MCF 10A (cell line): ENCODE measurements at regions of chr3 and their contacts with region 1.

Region 1: GRCh38 chr3:134373994-134374790 is at the start of gene AMOTL2:
- DNase-seq: peak; percentile 93
- H3K4me3 Mint-ChIP-seq: peak within 1 kb of the TSS; percentile 93
- H3K27ac Mint-ChIP-seq: peak within 1 kb of the TSS; percentile 88
- H3K4me1 Mint-ChIP-seq: peaks cover 48% of the 10 kb centered on the region
- H3K27me3 Mint-ChIP-seq: no peaks in the 10 kb centered on the region
- CTCF ChIP-seq: no peak
- total RNA-seq, gene AMOTL2: 92.6 and 137 TPM in 2 replicates

Region 2: DNA sequence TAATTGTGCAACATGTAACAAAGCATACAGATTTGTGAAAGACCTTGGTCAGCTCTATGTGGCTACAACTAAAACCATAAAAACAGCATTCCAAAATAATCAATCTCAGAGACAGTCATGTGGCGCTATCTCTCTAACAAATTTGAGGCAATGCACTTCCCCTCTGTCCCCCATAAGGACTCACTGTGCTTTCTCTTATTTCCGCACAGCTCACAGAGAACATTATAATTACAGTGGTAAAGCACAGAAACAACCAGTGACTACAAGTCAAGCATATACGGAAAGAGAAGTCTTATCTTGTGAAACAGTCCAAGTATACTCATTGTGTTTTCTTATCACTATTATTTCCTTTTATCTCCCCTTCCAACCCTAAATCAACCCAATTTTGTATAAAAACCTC is 187.8 kb before region 1 on chr3:
- CTCF ChIA-PET with region 1: no interaction called
- POLR2A ChIA-PET with region 1: no interaction called
- intact Hi-C with region 1: no loop called
- DNase-seq: no peak
- H3K4me3 Mint-ChIP-seq: no peak overlapping the region
- H3K27ac Mint-ChIP-seq: no peak overlapping the region
- H3K4me1 Mint-ChIP-seq: peaks cover 5% of the 10 kb centered on the region
- H3K27me3 Mint-ChIP-seq: no peaks in the 10 kb centered on the region
- CTCF ChIP-seq: no peak

Region 3: GRCh38 chr3:134320749-134321148 is 53.4 kb before region 1 on chr3:
- CTCF ChIA-PET with region 1: interaction called, 4 read pairs
- POLR2A ChIA-PET with region 1: interaction called, 55 read pairs
- intact Hi-C with region 1: no loop called
- DNase-seq: peak; percentile 84
- H3K4me3 Mint-ChIP-seq: no peak overlapping the region
- H3K27ac Mint-ChIP-seq: peak overlapping the region; percentile 66
- H3K4me1 Mint-ChIP-seq: peaks cover 43% of the 10 kb centered on the region
- H3K27me3 Mint-ChIP-seq: no peaks in the 10 kb centered on the region
- CTCF ChIP-seq: no peak

Region 4: GRCh38 chr3:134333522-134334181 is 40.5 kb before region 1 on chr3:
- CTCF ChIA-PET with region 1: interaction called, 4 read pairs
- POLR2A ChIA-PET with region 1: interaction called, 55 read pairs
- intact Hi-C with region 1: no loop called
- DNase-seq: no peak
- H3K4me3 Mint-ChIP-seq: no peak overlapping the region
- H3K27ac Mint-ChIP-seq: peak overlapping the region; percentile 84
- H3K4me1 Mint-ChIP-seq: peaks cover 83% of the 10 kb centered on the region
- H3K27me3 Mint-ChIP-seq: no peaks in the 10 kb centered on the region
- CTCF ChIP-seq: no peak

Region 5: DNA sequence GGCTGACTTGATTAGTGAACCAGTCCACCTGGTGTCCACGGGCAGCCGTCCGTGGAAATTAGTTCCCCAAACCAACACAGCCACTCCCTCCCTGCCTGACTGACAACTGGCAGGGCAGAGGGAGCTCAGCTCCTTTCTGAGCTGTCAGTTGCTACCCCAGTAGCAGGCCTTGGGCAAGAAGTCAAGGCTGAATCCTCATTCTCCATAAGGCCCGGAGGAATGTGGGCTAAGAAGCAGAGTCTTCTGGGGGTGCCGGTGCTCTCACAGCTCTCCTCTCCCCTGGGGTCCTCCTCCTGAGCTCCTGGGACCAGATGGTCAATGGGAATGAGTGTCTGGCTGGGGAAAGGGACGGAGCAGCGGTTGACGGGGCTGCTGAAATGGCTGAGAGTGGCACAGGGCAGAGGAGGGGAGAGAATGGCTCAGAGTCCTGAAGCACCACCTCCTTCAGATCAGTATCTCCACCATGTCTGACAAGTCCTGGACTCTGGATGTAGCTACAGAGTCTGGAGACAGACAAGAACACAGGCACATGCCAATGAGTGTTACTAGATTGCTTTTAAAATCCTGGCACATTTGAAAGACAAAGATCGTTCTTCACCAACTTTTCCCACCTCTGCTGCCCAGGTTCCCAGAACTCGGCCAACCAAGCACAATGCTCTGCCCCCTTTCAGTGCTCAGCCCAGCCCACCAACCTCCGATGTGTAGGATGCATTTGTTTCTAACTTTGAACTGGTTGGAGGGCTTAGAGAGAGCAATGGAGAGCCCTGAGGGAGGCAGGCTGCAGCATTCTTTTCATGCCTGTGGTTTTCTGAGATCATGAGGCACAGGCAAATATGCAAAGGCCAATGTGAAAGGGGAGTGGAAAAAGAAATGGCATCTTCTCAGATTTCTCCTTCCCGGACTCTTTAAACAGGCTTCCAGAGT is 16.7 kb before region 1 on chr3:
- CTCF ChIA-PET with region 1: interaction called, 6 read pairs
- POLR2A ChIA-PET with region 1: interaction called, 114 read pairs
- intact Hi-C with region 1: no loop called
- DNase-seq: peak; percentile 90
- H3K4me3 Mint-ChIP-seq: peak overlapping the region; percentile 12
- H3K27ac Mint-ChIP-seq: peak overlapping the region; percentile 27
- H3K4me1 Mint-ChIP-seq: peaks cover 41% of the 10 kb centered on the region
- H3K27me3 Mint-ChIP-seq: no peaks in the 10 kb centered on the region
- CTCF ChIP-seq: no peak

Region 6: DNA sequence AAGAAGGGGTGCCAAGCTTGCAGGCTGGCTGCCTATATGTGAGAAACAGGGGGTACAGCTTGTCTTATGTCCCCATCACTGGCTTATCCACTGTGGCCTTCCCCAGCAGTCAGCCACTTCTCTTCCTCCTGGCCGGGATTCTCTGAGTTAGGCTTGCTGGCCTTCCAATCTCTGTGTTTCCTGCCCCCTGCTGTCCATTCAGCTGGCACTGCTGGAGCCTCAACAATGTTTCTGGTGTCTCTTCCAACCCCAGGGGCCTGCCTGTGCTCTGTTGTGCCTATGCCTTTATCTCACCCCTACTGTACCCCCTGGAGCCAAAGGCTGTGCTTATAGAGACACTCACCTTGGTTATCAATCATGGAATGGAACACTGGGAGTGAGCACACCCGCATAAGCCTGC is 75.1 kb after region 1 on chr3:
- CTCF ChIA-PET with region 1: interaction called, 6 read pairs
- POLR2A ChIA-PET with region 1: interaction called, 25 read pairs
- intact Hi-C with region 1: loop called (anchors 2 kb)
- DNase-seq: peak; percentile 67
- H3K4me3 Mint-ChIP-seq: no peak overlapping the region
- H3K27ac Mint-ChIP-seq: no peak overlapping the region
- H3K4me1 Mint-ChIP-seq: peaks cover 37% of the 10 kb centered on the region
- H3K27me3 Mint-ChIP-seq: no peaks in the 10 kb centered on the region
- CTCF ChIP-seq: peak; percentile 47